K562 (cell line): ENCODE measurements at regions of chr2 and their contacts with region 1.

Region 1: GRCh38 chr2:155846259-155846658 is 486.3 kb downstream of the NR4A2 start:
- DNase-seq: no peak
- ATAC-seq: no peak
- H3K4me3 ChIP-seq: no peak overlapping the region
- H3K27ac ChIP-seq: no peak overlapping the region
- H3K4me1 ChIP-seq: no peaks in the 10 kb centered on the region
- H3K27me3 ChIP-seq: no peaks in the 10 kb centered on the region
- CTCF ChIP-seq: no peak
- EP300 ChIP-seq: no peak
- POLR2A ChIP-seq: no peak
- RAD21 ChIP-seq: no peak

Region 2: GRCh38 chr2:155733091-155733853 is 113.0 kb before region 1 on chr2:
- CTCF ChIA-PET with region 1: no interaction called
- POLR2A ChIA-PET with region 1: no interaction called
- in situ Hi-C with region 1: no loop called
- intact Hi-C with region 1: no loop called
- DNase-seq: no peak
- ATAC-seq: no peak
- H3K4me3 ChIP-seq: no peak overlapping the region
- H3K27ac ChIP-seq: no peak overlapping the region
- H3K4me1 ChIP-seq: no peaks in the 10 kb centered on the region
- H3K27me3 ChIP-seq: no peaks in the 10 kb centered on the region
- CTCF ChIP-seq: no peak
- EP300 ChIP-seq: no peak
- POLR2A ChIP-seq: no peak
- RAD21 ChIP-seq: no peak

Region 3: DNA sequence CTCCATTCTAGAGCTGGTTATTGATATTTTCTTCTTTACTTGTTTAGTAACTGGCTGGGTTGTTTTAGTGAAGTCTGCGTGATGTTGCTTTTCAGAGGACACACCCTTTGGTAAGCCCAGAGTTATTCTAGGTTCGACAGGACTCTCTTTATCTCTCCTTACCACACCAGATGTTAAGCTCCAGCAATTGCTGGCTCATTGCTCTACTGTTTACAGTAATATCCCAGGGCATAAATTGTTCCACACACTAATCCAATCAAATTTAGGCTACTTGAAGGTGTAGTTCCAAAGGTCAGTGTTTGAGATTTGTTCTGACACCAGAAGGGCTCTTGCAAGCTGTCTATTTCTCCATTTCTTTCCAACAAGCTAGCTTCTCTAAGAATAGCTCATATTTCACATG is 20.4 kb before region 1 on chr2:
- CTCF ChIA-PET with region 1: no interaction called
- POLR2A ChIA-PET with region 1: no interaction called
- in situ Hi-C with region 1: no loop called
- intact Hi-C with region 1: loop called (anchors 2 kb)
- DNase-seq: peak in 2 of 4 experiments; percentile 27 to 30
- ATAC-seq: peak; percentile 70
- H3K4me3 ChIP-seq: no peak overlapping the region
- H3K27ac ChIP-seq: no peak overlapping the region
- H3K4me1 ChIP-seq: no peaks in the 10 kb centered on the region
- H3K27me3 ChIP-seq: no peaks in the 10 kb centered on the region
- CTCF ChIP-seq: no peak
- EP300 ChIP-seq: no peak
- POLR2A ChIP-seq: no peak
- RAD21 ChIP-seq: no peak

Region 4: DNA sequence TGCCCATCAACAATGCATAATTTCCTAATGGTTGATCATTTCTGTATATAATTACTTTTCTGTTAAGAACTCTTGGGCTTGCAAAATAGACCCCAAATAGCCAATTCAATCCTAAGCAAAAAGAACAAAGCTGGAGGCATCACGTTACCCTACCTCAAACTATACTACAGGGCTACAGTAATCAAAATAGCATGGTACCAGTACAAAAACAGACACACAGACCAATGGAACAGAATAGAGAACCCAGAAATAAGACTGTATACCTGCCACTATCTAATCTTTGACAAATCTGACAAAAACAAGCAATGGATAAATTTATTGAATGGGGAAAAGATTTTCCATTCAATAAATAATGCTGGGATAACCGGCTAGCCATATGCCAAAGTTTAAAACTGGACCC is 407.5 kb after region 1 on chr2:
- CTCF ChIA-PET with region 1: no interaction called
- POLR2A ChIA-PET with region 1: no interaction called
- in situ Hi-C with region 1: no loop called
- intact Hi-C with region 1: no loop called
- DNase-seq: no peak
- ATAC-seq: peak; percentile 88
- H3K4me3 ChIP-seq: peak overlapping the region; percentile 47
- H3K27ac ChIP-seq: peak overlapping the region; percentile 63; the same call in 1 of the 3 replicates
- H3K4me1 ChIP-seq: no peaks in the 10 kb centered on the region; a peak in 1 of 5 replicates
- H3K27me3 ChIP-seq: no peaks in the 10 kb centered on the region
- CTCF ChIP-seq: no peak
- EP300 ChIP-seq: no peak
- POLR2A ChIP-seq: no peak
- RAD21 ChIP-seq: no peak